Ascending aorta (tissue), 2 donors: ENCODE measurements at regions of chr2 and their contacts with region 1.

Region 1: DNA sequence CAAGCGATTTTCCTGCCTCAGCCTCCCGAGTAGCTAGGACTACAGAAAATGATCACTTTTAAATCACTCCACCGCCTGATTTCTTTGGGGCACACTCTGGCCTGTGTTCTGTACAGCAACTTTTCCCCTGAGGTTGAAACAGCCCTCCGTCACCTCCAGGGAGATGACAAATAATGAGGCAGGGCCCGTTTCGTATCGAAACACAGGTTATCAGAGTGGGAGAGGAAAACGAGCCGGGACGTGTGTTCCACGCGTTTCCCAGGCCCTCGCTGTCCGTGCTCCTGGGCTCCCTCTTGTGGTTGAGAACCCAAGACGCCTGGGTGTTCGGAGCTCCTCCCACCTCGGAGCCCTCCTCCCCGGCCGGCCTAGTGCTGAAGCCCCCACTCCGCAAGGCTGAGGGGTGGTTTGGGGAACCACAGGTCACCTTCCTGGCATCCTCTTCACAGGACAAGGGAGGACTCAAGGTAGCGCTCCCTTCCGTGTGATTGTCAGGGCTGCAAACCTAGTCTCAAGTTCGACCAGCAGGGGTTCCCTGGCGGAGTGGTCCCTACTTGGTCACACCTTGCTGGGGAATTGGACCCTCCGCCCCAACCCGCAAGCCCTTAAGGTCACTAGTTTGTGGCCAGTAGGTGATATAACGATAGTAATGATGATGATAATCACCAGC is 12.8 kb downstream of the ATP6V1B1 start:
- DNase-seq: peak in 1 of 2 donors; percentile 88
- H3K4me3 ChIP-seq: peak overlapping the region; percentile 46 to 63
- H3K27ac ChIP-seq: no peak overlapping the region
- H3K4me1 ChIP-seq: no peaks in the 10 kb centered on the region
- H3K27me3 ChIP-seq: no peaks in the 10 kb centered on the region
- CTCF ChIP-seq: peak; percentile 72 to 94 (median 85)

Region 2: GRCh38 chr2:70861777-70862625 is 86.5 kb before region 1 on chr2:
- intact Hi-C with region 1: loop called (anchors 2 kb)
- DNase-seq: peak; percentile 21 to 84
- H3K4me3 ChIP-seq: no peak overlapping the region
- H3K27ac ChIP-seq: no peak overlapping the region
- H3K4me1 ChIP-seq: no peaks in the 10 kb centered on the region
- H3K27me3 ChIP-seq: no peaks in the 10 kb centered on the region
- CTCF ChIP-seq: peak; percentile 73 to 90 (median 87)